ENCODE measurements at regions of chr17 and their contacts with region 1.

Region 1: DNA sequence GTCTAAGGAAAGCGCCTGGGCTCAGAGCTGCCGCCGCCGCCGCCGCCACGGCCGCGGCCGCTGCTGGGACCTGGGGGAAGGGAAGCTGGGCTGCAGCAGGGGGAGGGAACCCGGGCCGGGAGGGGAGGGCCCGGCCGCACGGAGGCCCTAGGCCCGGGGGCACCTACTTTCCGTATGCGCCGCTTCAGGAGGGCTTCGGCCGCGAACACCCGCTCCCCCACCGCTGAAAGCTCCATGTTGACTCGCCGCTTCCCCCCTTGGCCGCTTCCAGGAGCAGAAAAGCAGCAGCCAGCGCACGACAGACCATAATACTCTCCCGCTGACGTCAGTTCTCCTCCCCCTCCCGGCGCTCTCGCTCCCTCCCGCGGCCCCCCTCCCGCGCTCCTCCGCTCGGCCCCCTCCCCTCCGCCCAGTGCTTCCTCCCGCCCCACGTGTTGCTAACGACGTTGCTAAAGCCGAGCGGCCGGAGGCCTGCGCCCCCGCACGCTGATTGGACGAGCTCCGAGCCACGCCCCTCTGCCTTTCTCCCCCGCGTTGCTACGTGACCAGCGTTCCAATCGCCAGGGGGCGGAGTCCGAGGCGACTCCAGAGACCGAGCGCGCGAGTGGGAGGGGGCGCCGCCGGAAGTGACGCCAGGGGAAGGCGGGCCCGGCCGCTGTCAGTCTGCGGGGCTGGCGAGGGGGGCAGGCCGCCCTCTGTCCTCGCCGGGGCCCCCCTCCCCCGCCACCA is at the start of gene CBX8:
- DNase-seq: peak; percentile 97 to 99 (median 98)
- ATAC-seq: peak; percentile 95
- H3K4me3 ChIP-seq: peak within 1 kb of the TSS; percentile 54
- H3K4me3 Mint-ChIP-seq: peak within 1 kb of the TSS; percentile 84 to 92 (median 87)
- H3K27ac ChIP-seq: peak within 1 kb of the TSS; percentile 77
- H3K27ac Mint-ChIP-seq: peak within 1 kb of the TSS in 8 of 9 donors; percentile 75 to 95 (median 90)
- H3K4me1 ChIP-seq: peaks cover 31 to 39% of the 10 kb centered on the region in 2 donors
- H3K4me1 Mint-ChIP-seq: peaks cover 17 to 54% (median 34%) of the 10 kb centered on the region in 7 donors
- H3K27me3 ChIP-seq: peaks cover 29 to 32% of the 10 kb centered on the region in 2 donors
- H3K27me3 Mint-ChIP-seq: peaks cover 24 to 51% (median 34%) of the 10 kb centered on the region in 5 donors
- total RNA-seq, gene CBX8: 2.4 to 11.9 (median 3.0) TPM

Region 2: DNA sequence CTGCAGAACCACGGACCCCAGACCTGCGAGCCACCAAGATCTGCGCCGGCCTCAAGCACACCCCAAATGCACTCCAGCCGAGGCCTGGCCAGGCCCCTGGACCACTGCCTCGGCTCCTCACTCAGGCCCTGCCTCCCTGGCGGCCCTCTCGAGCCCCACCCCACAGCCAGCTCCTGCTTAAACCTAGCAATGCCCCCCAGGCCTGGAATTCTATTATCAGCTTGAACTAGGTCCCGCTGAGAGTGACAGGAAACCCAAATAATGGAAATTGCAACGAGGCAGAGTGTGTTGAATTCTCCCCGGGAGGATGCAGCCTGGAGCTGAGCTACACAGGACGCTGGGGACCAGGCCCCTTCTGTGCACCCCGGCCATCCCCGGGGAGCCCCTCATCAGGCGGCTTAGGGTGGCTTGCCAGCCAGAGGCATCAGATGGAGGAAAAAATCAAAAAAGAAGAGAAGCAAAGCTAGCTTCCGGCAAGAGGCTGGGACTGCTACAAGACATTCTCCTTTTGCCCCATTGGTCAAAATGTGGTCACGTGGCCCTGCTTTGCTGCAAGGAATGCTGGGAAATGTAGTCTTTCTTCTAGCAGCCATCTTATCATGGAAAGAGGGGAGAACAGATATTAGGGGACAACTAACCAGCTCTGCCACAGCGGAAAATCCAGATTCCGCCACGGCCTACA is 68.6 kb before region 1 on chr17:
- CTCF ChIA-PET with region 1: no interaction called
- POLR2A ChIA-PET with region 1: no interaction called
- intact Hi-C with region 1: no loop called
- DNase-seq: peak; percentile 62 to 91 (median 86)
- ATAC-seq: peak; percentile 91
- H3K4me3 ChIP-seq: peak overlapping the region; percentile 31
- H3K4me3 Mint-ChIP-seq: peak overlapping the region; percentile 53 to 85 (median 76)
- H3K27ac ChIP-seq: peak overlapping the region; percentile 56
- H3K27ac Mint-ChIP-seq: peak overlapping the region; percentile 72 to 92 (median 87)
- H3K4me1 ChIP-seq: peaks cover 4 to 12% of the 10 kb centered on the region in 2 donors
- H3K4me1 Mint-ChIP-seq: peaks cover 5 to 38% (median 21%) of the 10 kb centered on the region in 7 donors
- H3K27me3 ChIP-seq: no peaks in the 10 kb centered on the region
- H3K27me3 Mint-ChIP-seq: no peaks in the 10 kb centered on the region

Region 3: DNA sequence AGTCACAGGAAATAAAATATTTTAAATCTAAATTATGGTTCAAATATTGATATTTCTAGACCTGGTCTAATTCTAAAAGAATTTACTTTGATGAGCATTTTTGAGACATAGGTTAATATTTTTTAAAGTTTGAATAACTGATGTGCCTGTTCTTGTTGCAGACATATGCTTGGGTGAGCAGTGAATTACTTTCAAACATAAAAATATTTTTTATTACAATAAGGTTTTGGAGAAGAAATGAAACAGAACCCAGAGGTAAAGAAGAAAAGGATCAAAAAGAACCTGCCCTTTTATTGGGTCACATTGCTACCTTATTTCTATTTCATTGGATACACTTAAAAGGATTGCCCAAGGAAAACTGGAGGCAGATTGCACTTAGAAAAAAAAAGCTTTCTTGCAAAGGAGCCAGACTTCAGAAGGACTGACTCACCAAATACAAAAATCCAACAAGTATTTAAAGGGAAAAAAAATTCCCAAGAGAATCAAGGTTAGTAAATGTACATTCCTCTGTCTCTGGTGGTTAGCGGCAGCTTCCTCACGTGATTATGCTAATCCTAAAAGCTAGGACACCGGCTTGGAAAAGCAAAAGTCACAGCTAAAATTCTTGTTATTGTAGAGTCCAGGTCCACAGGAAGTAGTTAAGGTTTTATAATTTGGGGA is 47.6 kb before region 1 on chr17:
- CTCF ChIA-PET with region 1: no interaction called
- POLR2A ChIA-PET with region 1: interaction called, 3 read pairs
- intact Hi-C with region 1: loop called (anchors 1 to 5 kb)
- DNase-seq: no peak
- ATAC-seq: no peak
- H3K4me3 ChIP-seq: no peak overlapping the region
- H3K4me3 Mint-ChIP-seq: no peak overlapping the region
- H3K27ac ChIP-seq: no peak overlapping the region
- H3K27ac Mint-ChIP-seq: no peak overlapping the region
- H3K4me1 ChIP-seq: peaks cover 0 to 25% of the 10 kb centered on the region in 2 donors
- H3K4me1 Mint-ChIP-seq: peaks cover 0 to 28% (median 21%) of the 10 kb centered on the region in 7 donors
- H3K27me3 ChIP-seq: peaks cover 0 to 19% of the 10 kb centered on the region in 2 donors
- H3K27me3 Mint-ChIP-seq: peaks cover 34 to 60% (median 42%) of the 10 kb centered on the region in 5 donors

Region 4: DNA sequence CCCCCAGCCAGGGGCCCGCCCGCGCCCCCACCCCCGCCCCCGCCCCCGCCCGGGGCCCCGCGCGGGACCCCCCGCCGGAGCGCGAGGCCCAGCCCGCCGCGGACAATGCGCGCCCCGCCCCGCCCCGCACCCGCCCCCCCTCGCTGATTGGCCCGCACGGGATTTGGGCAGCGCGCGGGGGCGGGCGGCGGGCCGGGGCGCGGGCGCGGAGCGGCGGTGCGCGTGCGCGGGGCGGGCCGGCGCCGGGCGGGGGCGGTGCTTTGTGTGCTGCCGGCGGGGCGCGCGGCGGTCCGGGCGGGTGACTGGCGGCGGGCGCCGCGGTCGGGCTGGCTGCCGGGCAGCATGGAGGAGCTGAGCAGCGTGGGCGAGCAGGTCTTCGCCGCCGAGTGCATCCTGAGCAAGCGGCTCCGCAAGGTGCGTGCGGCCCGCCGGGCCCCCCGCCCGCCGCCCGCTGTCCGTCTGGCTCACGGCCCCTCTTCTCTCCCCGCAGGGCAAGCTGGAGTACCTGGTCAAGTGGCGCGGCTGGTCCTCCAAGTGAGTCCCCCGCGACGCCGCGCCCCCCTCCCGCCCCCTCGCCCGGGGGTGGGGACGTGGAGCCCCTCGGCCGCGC is 18.9 kb before region 1 on chr17 and contains the start of gene CBX2:
- CTCF ChIA-PET with region 1: no interaction called
- POLR2A ChIA-PET with region 1: interaction called, 4 read pairs
- intact Hi-C with region 1: loop called (anchors 1 to 2 kb)
- DNase-seq: peak; percentile 58 to 92 (median 77)
- ATAC-seq: peak; percentile 95
- H3K4me3 ChIP-seq: peak within 1 kb of the TSS; percentile 28
- H3K4me3 Mint-ChIP-seq: peak within 1 kb of the TSS; percentile 80 to 92 (median 86)
- H3K27ac ChIP-seq: no peak within 1 kb of the TSS
- H3K27ac Mint-ChIP-seq: peak within 1 kb of the TSS in 8 of 9 donors; percentile 32 to 89 (median 72)
- H3K4me1 ChIP-seq: peaks cover 7 to 10% of the 10 kb centered on the region in 2 donors
- H3K4me1 Mint-ChIP-seq: peaks cover 10 to 37% (median 24%) of the 10 kb centered on the region in 7 donors
- H3K27me3 ChIP-seq: peaks cover 11 to 26% of the 10 kb centered on the region in 2 donors
- H3K27me3 Mint-ChIP-seq: peaks cover 72 to 84% (median 77%) of the 10 kb centered on the region in 5 donors
- total RNA-seq, gene CBX2: 0.24 to 4.4 (median 0.41) TPM

Region 5: DNA sequence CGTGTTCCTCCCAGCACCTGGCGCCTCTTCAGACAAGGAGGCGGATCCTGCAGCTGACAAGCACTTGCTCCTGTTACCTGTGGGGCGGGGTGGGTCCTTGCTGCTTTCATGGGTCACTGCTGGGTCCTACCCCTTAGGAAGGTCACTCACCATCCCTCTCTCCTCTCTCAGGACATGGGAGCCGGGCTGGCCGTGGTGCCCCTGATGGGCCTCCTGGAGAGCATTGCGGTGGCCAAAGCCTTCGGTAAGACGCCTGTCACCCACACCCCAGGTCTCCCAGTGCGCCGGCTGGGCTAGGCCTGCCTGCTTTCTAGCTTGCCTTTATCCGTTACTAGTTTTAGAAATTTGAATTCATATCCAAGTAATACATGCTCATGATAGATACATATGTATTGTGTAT is 440.4 kb after region 1 on chr17:
- CTCF ChIA-PET with region 1: no interaction called
- POLR2A ChIA-PET with region 1: no interaction called
- intact Hi-C with region 1: no loop called
- DNase-seq: no peak
- ATAC-seq: no peak
- H3K4me3 ChIP-seq: no peak overlapping the region
- H3K4me3 Mint-ChIP-seq: no peak overlapping the region
- H3K27ac ChIP-seq: no peak overlapping the region
- H3K27ac Mint-ChIP-seq: no peak overlapping the region
- H3K4me1 ChIP-seq: no peaks in the 10 kb centered on the region
- H3K4me1 Mint-ChIP-seq: no peaks in the 10 kb centered on the region
- H3K27me3 ChIP-seq: no peaks in the 10 kb centered on the region
- H3K27me3 Mint-ChIP-seq: no peaks in the 10 kb centered on the region